ENCODE measurements at regions of chr6 and their contacts with region 1.

Region 1: GRCh38 chr6:25027221-25027916 is 91.6 kb upstream of the RIPOR2 start:
- DNase-seq: peak in 1 of 2 experiments; percentile 51
- H3K4me3 ChIP-seq: no peak overlapping the region
- H3K27ac ChIP-seq: no peak overlapping the region
- H3K4me1 ChIP-seq: peaks cover 4% of the 10 kb centered on the region
- H3K27me3 ChIP-seq: no peaks in the 10 kb centered on the region
- CTCF ChIP-seq: no peak

Region 2: GRCh38 chr6:24855395-24856245 is 171.7 kb before region 1 on chr6:
- CTCF ChIA-PET with region 1: interaction called, 11 read pairs
- POLR2A ChIA-PET with region 1: no interaction called
- intact Hi-C with region 1: no loop called
- DNase-seq: peak; percentile 44 to 58
- H3K4me3 ChIP-seq: no peak overlapping the region
- H3K27ac ChIP-seq: no peak overlapping the region
- H3K4me1 ChIP-seq: peaks cover 26% of the 10 kb centered on the region
- H3K27me3 ChIP-seq: no peaks in the 10 kb centered on the region
- CTCF ChIP-seq: peak; percentile 89

Region 3: DNA sequence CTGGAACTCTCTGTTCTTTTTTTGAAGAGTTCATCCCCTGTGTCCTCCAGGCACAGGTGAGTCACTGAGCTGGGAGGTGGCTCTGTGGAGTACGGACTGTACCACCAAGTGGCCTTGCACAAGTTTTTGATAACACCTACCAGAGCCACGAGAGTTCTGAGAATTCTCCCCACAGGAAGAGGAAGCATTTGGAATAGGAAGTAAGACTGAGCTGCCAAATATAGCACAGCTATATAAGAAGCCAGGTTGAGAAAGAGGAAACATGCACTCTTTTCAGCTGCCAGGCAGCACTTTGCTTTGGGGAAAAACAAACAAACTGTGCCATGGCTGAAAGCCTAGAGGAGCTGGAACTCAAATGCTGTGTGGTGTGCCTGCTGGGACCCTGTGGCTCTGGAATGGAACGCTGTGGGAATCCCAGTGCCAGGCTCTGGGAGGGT is 20.8 kb before region 1 on chr6:
- CTCF ChIA-PET with region 1: no interaction called
- POLR2A ChIA-PET with region 1: interaction called, 13 read pairs
- intact Hi-C with region 1: no loop called
- DNase-seq: peak; percentile 67 to 92
- H3K4me3 ChIP-seq: no peak overlapping the region
- H3K27ac ChIP-seq: peak overlapping the region; percentile 69
- H3K4me1 ChIP-seq: peaks cover 49% of the 10 kb centered on the region
- H3K27me3 ChIP-seq: no peaks in the 10 kb centered on the region
- CTCF ChIP-seq: no peak

Region 4: DNA sequence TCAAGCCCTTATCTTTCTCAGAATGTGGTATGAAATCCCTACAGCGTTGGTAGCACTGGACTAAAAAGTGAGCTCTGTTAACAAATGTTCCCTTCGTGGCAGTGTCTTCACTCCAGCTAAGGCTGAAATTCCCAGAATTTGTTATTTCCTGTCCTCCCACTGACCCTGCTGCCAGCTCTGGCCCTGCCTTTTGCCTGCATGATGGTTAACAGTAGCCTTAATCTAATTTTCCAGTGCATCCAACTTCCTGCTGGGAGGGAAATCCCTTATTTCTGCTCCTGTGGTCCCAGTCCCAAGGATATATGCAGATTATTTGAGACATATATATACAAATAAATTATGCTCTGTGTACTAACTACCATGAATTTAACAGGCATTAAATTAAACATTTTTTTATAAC is 94.6 kb after region 1 on chr6:
- CTCF ChIA-PET with region 1: interaction called, 10 read pairs
- POLR2A ChIA-PET with region 1: no interaction called
- intact Hi-C with region 1: no loop called
- DNase-seq: no peak
- H3K4me3 ChIP-seq: no peak overlapping the region
- H3K27ac ChIP-seq: no peak overlapping the region
- H3K4me1 ChIP-seq: no peaks in the 10 kb centered on the region
- H3K27me3 ChIP-seq: no peaks in the 10 kb centered on the region
- CTCF ChIP-seq: no peak

Measured in PC-9 (cell line).